ENCODE measurements at regions of chr5 and their contacts with region 1.

Region 1: DNA sequence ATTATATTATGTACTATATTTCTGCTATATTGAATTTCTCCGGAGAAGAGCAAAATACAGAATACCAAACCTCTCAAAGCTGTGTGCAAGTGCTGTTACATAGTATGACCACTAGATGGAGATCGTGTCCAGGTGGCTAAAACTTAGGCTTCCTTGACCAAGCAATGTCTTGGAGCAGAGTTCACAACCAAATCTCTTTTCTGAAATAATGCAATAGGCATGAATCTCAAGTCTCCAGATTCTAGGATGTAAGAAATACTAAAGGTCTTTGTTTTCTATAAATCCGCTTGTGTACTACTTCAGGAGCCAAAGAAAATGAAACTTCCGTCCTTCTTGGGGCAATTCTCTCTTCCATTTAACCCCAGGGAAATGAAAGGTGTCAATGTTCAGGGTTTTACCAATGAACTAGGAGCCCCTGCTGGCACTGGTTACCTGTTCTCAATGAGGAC is 181.5 kb upstream of the RAI14 start:
- DNase-seq: peak; percentile 40
- ATAC-seq: peak; percentile 66
- H3K4me3 ChIP-seq: no peak overlapping the region
- H3K27ac ChIP-seq: no peak overlapping the region
- H3K4me1 ChIP-seq: peaks cover 42% of the 10 kb centered on the region
- H3K27me3 ChIP-seq: peaks cover 2 to 19% of the 10 kb centered on the region in 2 experiments; a peak in 4 of 5 replicates
- CTCF ChIP-seq: peak; percentile 86
- EP300 ChIP-seq: no peak
- POLR2A ChIP-seq: no peak
- RAD21 ChIP-seq: peak; percentile 63

Region 2: DNA sequence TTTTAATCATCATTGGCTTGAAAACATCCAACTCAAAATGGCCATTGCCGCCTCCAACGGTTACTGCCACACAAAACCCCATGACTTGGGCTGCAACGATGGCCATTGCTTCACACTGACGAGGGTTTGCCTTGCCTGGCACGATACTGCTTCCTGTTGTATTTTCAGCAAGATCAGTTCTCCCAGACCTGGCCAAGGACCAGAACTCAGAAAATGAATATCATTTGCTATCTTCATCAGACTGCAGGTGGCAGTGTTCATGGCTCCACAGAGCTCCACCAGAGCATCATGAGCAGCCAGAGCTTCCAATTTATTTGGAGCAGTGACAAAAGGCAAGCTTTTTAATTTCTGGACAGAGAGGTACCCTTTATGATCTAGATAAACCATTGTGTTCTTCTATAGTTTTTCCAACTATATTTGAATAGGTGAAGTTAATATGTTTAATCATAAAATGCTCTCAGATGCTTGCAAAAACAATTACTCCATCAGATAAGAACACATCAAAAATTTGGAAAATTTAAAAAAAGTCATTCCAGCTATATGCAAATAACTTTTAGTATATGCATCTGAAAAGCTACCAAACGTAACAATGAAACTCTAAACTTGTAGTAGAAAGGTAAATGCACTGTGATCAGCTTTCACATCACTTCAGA is 477.1 kb before region 1 on chr5:
- CTCF ChIA-PET with region 1: no interaction called
- POLR2A ChIA-PET with region 1: no interaction called
- in situ Hi-C with region 1: loop called (anchors 25 kb)
- intact Hi-C with region 1: loop called (anchors 10 kb)
- DNase-seq: peak; percentile 52
- ATAC-seq: peak; percentile 71
- H3K4me3 ChIP-seq: no peak overlapping the region
- H3K27ac ChIP-seq: no peak overlapping the region
- H3K4me1 ChIP-seq: peaks cover 45% of the 10 kb centered on the region
- H3K27me3 ChIP-seq: no peaks in the 10 kb centered on the region
- CTCF ChIP-seq: peak; percentile 71
- EP300 ChIP-seq: no peak
- POLR2A ChIP-seq: no peak
- RAD21 ChIP-seq: peak; percentile 64; the same call in 1 of the 2 replicates

Region 3: GRCh38 chr5:34533582-34534522 is 59.3 kb after region 1 on chr5:
- CTCF ChIA-PET with region 1: interaction called, 5 read pairs
- POLR2A ChIA-PET with region 1: no interaction called
- in situ Hi-C with region 1: no loop called
- intact Hi-C with region 1: loop called (anchors 5 kb)
- DNase-seq: peak; percentile 14
- ATAC-seq: no peak
- H3K4me3 ChIP-seq: no peak overlapping the region
- H3K27ac ChIP-seq: no peak overlapping the region
- H3K4me1 ChIP-seq: peaks cover 8% of the 10 kb centered on the region; the same call in 1 of the 2 replicates
- H3K27me3 ChIP-seq: no peaks in the 10 kb centered on the region
- CTCF ChIP-seq: no peak
- EP300 ChIP-seq: no peak
- POLR2A ChIP-seq: no peak
- RAD21 ChIP-seq: no peak

Region 4: GRCh38 chr5:34898258-34898895 is 423.8 kb after region 1 on chr5:
- CTCF ChIA-PET with region 1: interaction called, 20 read pairs
- POLR2A ChIA-PET with region 1: no interaction called
- in situ Hi-C with region 1: no loop called
- intact Hi-C with region 1: loop called (anchors 1 kb)
- DNase-seq: peak; percentile 56
- ATAC-seq: peak; percentile 95
- H3K4me3 ChIP-seq: no peak overlapping the region
- H3K27ac ChIP-seq: no peak overlapping the region
- H3K4me1 ChIP-seq: peaks cover 6% of the 10 kb centered on the region
- H3K27me3 ChIP-seq: no peaks in the 10 kb centered on the region
- CTCF ChIP-seq: peak; percentile 88
- EP300 ChIP-seq: no peak
- POLR2A ChIP-seq: no peak
- RAD21 ChIP-seq: peak; percentile 88

Region 5: DNA sequence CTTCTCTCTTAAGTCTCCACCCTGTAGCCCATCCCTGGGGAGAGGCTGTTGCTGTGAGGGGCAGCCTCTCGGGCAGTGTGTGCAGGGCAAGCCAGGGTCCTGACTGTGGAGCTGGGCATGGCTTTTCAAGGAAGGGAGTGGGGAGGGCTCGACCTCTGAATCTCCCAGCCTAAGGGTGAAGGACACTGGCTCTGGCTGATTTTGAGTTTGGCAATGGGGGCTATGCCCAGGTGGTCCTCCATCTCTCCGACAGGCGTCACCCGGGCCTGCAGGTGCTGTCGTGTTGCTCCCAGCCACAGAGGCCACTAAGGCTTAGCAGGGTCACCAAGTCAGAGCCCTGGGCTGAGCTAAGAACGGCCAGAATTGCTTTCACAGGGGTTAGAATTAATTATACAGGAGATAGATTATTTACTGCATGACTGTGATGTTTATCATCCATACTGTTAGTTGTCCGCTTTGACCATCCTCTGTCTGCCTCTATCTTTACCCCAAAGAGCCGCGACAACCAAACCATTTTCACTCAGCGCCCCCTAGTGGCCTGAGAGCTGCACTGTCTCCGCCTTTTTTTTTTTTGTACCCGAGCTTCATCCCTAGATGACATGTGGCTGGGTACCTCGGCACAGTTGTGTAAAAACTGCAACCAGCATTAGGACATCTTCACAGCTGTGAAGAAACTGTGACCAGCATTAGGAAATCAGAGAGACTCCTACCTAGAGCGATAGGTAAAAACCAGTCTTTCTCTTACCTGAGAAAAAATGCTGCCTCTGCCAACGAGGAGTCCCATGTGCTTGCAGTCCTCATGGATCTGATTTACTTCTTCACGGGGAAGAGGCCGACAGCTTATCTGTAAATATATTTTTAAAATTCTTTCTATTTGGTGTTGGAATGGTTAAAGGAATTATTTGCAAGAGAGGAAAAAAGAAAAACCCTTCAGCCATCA is 528.7 kb after region 1 on chr5:
- CTCF ChIA-PET with region 1: no interaction called
- POLR2A ChIA-PET with region 1: no interaction called
- in situ Hi-C with region 1: no loop called
- intact Hi-C with region 1: loop called (anchors 5 kb)
- DNase-seq: peak; percentile 43
- ATAC-seq: peak; percentile 94
- H3K4me3 ChIP-seq: no peak overlapping the region
- H3K27ac ChIP-seq: no peak overlapping the region
- H3K4me1 ChIP-seq: no peaks in the 10 kb centered on the region
- H3K27me3 ChIP-seq: no peaks in the 10 kb centered on the region
- CTCF ChIP-seq: peak; percentile 87
- EP300 ChIP-seq: no peak
- POLR2A ChIP-seq: no peak
- RAD21 ChIP-seq: peak; percentile 22; the same call in 1 of the 2 replicates

Measured in HepG2 (cell line).